ENCODE measurements at regions of chr18 and their contacts with region 1.

Region 1: GRCh38 chr18:830315-830901 is 18.4 kb upstream of the YES1 start:
- DNase-seq: peak; percentile 83 to 93 (median 91)
- H3K4me3 ChIP-seq: peak overlapping the region in 1 of 7 experiments; percentile 46
- H3K27ac ChIP-seq: peak overlapping the region in 1 of 2 experiments; percentile 32
- H3K4me1 ChIP-seq: peaks cover 8 to 14% (median 13%) of the 10 kb centered on the region in 4 experiments
- H3K27me3 ChIP-seq: no peaks in the 10 kb centered on the region

Region 2: DNA sequence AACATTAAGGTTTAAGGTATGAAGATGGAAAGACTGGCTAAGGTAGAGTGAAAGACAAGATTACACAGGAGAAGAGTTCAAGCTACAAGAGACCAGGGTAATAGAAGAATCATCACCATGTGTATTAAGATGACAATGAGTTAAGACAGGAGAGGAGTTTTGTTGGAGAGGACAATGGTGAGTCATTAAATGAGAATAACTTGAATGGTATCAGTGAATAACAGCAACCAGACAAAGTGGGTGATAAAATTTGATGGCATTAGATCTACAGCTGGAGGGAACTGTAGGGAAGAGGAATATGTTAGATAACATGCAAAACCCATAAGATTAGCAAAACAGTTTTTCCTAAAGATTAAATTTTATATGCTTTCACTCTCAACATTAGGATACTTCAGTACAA is 99.2 kb before region 1 on chr18:
- CTCF ChIA-PET with region 1: interaction called, 22 read pairs
- POLR2A ChIA-PET with region 1: no interaction called
- DNase-seq: peak in 1 of 3 donors; percentile 38
- H3K4me3 ChIP-seq: no peak overlapping the region
- H3K27ac ChIP-seq: no peak overlapping the region
- H3K4me1 ChIP-seq: no peaks in the 10 kb centered on the region
- H3K27me3 ChIP-seq: no peaks in the 10 kb centered on the region

Region 3: GRCh38 chr18:754666-755065 is 75.7 kb before region 1 on chr18:
- CTCF ChIA-PET with region 1: interaction called, 12 read pairs
- POLR2A ChIA-PET with region 1: no interaction called
- DNase-seq: no peak
- H3K4me3 ChIP-seq: no peak overlapping the region
- H3K27ac ChIP-seq: no peak overlapping the region
- H3K4me1 ChIP-seq: no peaks in the 10 kb centered on the region
- H3K27me3 ChIP-seq: no peaks in the 10 kb centered on the region

Region 4: DNA sequence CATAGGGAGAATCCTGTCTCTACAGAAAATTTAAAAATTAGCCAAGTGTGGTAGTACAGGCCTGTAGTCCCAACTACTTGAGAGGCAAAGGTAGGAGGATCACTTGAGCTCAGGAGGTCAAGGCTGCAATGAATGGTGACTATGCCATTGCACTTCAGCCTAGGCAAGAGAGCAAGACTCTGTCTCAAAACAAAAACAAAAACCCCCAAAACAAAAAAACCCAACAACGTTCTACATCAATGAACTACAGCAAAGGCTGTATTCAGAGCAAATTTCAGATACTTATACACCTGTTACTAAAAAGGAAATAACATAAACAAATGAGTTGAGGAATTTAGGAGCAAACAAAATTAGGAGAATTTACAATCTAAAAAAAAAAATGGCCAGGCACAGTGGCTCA is 41.0 kb before region 1 on chr18:
- CTCF ChIA-PET with region 1: interaction called, 12 read pairs
- POLR2A ChIA-PET with region 1: no interaction called
- DNase-seq: no peak
- H3K4me3 ChIP-seq: no peak overlapping the region
- H3K27ac ChIP-seq: no peak overlapping the region
- H3K4me1 ChIP-seq: peaks cover 0 to 18% (median 14%) of the 10 kb centered on the region in 4 experiments
- H3K27me3 ChIP-seq: no peaks in the 10 kb centered on the region